Vagina (tissue), 2 donors: ENCODE measurements at regions of chr15 and their contacts with region 1.

Region 1: DNA sequence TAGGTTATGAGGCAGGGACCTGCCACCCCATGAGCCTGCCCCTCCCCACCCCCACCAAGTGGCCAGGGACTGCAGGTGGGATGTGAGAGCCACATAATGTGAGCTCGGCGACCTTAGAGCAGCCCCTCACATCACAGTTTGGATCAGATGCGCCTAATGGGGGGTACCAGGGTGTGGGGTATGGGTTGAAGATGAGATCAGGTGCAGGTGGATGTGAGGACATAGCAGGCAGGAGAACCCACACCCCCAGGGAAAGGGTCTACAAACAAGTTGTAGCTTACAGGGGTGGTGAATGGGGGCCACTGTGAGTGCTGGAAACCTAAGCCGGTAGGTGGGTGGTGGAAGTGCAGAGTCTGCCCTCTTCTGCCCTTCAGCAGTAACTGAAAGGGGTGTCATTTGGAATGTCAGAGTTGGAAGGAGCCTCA is 94.0 kb downstream of the CORO2B start:
- DNase-seq: peak in 1 of 2 donors; percentile 80
- H3K4me3 ChIP-seq: no peak overlapping the region
- H3K27ac ChIP-seq: no peak overlapping the region
- H3K4me1 ChIP-seq: peaks cover 4% of the 10 kb centered on the region
- H3K27me3 ChIP-seq: no peaks in the 10 kb centered on the region
- CTCF ChIP-seq: no peak
- POLR2A ChIP-seq: no peak

Region 2: DNA sequence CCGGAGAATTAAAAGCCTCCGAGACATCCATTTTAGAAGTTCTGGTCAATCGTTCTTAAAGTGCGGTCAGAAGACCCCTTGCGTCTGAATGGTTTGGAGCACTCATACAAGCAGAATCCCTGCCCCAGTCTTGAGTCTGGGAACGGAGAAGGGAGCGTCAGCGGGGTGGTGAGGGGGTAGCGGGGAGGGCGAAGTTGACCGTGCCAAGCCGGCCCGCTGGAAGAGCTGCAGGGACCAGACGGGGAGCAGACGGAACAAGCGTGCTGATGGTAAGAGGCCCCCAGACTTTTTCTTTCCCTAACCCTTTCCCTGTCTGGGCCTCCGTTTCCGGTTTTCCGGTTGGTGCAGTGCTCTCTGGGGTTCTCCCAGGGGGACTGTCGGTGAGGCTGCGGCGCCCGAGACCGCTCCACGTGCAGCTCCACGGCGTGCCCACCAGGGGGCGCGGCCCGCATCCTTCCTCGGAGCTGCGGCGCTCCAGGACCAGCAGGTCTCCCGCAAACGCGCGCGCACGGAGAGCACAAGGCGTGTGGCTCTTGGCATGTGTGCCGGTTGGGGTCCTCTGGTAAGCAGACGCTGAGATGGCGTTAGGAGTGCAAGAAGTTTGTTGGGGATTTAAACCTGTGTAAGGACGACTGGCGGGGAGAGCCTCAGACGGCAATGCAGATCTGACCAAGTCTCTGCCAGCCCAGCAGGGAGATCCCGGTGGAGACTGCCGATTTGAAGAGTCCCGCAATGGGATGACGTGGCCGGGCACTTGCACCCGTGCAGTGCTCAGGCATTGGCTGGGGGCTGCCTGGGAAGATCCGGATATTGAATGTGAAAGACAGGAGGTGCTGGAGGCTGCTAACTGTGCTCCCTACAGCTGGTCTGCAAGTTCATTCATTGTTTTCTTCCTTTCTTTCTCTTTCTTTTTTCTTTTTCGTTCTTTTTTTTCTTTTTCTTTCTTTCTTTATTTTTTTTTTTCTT is 113.2 kb before region 1 on chr15:
- intact Hi-C with region 1: loop called (anchors 5 kb)
- DNase-seq: peak in 1 of 2 donors; percentile 89
- H3K4me3 ChIP-seq: peak overlapping the region; percentile 34 to 52
- H3K27ac ChIP-seq: peak overlapping the region; percentile 45
- H3K4me1 ChIP-seq: peaks cover 9% of the 10 kb centered on the region
- H3K27me3 ChIP-seq: no peaks in the 10 kb centered on the region
- CTCF ChIP-seq: peak; percentile 90 to 98 (median 92)
- POLR2A ChIP-seq: peak in 1 of 2 donors; percentile 11

Region 3: GRCh38 chr15:68578174-68578979 is 94.4 kb before region 1 on chr15:
- intact Hi-C with region 1: loop called (anchors 2 kb)
- DNase-seq: no peak
- H3K4me3 ChIP-seq: peak overlapping the region; percentile 52 to 65
- H3K27ac ChIP-seq: peak overlapping the region; percentile 68
- H3K4me1 ChIP-seq: peaks cover 21% of the 10 kb centered on the region
- H3K27me3 ChIP-seq: no peaks in the 10 kb centered on the region
- CTCF ChIP-seq: peak in 2 of 3 experiments; percentile 34 to 56
- POLR2A ChIP-seq: peak in 1 of 2 donors; percentile 15